ENCODE measurements at regions of chr1 and their contacts with region 1.

Region 1: DNA sequence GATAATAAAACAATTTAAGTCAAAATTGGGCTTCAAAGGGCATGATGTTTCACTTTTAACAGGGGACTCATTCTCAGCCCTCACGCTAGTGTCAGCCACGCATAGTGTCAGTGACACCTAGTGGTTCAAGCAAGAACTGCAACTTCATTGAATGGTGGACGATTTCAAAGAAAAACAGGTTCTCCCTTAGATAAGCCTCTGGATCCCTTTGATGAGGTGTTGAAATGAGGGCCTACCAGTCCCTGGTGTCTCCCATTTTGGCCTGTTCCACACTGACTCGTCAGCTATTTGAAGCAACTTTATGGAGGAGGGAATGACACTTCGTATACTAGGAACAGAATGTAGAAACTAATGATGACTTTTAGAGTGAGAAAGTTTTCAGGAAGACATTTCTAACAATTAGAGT is 56.2 kb downstream of the FCRL5 start:
- DNase-seq: no peak
- ATAC-seq: peak; percentile 83
- H3K4me3 ChIP-seq: no peak overlapping the region
- H3K27ac ChIP-seq: no peak overlapping the region
- H3K4me1 ChIP-seq: peaks cover 4% of the 10 kb centered on the region; the same call in 1 of the 2 replicates
- H3K27me3 ChIP-seq: 0 out of 4 replicates have a peak, but pooled peaks cover 0 to 2% of the 10 kb centered on the region in 2 experiments
- CTCF ChIP-seq: peak; percentile 67 to 85 (median 81)
- EP300 ChIP-seq: no peak
- POLR2A ChIP-seq: no peak
- RAD21 ChIP-seq: peak; percentile 63

Region 2: DNA sequence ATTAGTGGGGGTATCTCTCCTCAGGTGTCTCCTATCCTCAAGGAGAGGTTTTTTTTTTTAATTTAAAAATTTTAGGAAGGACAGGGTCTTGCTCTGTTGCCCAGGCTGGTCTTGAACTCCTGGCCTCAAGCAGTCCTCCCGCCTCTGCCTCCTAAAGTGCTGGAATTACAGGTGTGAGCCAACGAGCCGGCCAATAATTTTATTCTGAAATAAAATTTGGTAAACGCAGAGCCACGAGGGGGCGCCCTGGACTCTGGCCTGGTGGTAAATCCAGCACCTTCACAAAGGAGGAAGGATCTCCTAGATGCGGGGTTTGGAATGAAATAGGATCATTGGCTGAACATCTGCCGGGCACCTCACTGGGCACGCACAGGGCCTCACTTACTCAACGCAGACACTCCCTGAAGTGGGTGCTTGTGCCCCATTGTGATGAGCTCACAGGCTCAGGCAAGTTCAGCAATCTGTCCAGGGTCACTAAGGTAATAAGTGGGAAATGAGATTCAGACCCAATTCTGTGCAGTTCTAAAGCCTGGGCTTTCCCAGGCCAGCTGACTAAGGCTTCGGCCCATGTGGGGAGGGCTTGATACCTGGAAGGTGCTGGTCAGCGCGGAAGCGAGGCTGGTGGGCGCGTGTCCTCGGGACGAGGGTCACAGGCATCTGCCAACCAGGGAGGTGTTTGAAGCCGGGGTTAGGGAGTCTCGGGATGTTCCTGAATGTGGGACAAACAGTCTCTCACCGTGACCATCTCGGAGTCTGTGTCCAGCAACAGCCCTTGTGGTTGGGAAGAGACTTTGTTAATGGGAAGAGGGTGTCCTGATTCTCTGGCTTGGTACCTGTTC is 325.2 kb before region 1 on chr1:
- CTCF ChIA-PET with region 1: interaction called, 12 read pairs
- POLR2A ChIA-PET with region 1: no interaction called
- RAD21 ChIA-PET with region 1: interaction called, 6 read pairs
- SMC1A ChIA-PET with region 1: interaction called, 7 read pairs
- in situ Hi-C with region 1: no loop called
- intact Hi-C with region 1: no loop called
- DNase-seq: no peak
- ATAC-seq: no peak; the same call in 2 of the 3 replicates
- H3K4me3 ChIP-seq: no peak overlapping the region
- H3K27ac ChIP-seq: no peak overlapping the region
- H3K4me1 ChIP-seq: peaks cover 43% of the 10 kb centered on the region
- H3K27me3 ChIP-seq: no peaks in the 10 kb centered on the region
- CTCF ChIP-seq: peak; percentile 49 to 67 (median 59)
- EP300 ChIP-seq: no peak
- POLR2A ChIP-seq: no peak
- RAD21 ChIP-seq: peak; percentile 35

Region 3: DNA sequence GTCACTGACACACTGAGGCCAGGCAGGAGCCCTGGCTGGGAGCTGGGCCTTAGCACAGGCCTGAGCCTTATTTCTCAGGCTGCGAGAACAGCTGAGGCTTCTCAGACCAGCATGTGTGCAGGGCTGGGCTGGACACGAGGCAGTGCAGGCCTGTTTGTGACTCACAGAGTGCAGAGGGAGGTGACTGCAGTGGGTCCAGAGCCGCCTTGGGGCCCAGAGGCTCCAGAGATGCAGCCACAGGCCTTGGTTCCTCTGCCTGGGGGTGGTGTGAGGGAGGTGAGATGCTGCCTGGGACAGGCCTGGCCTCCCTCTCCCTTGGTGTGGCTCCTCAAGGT is 296.7 kb before region 1 on chr1:
- CTCF ChIA-PET with region 1: interaction called, 24 read pairs
- POLR2A ChIA-PET with region 1: no interaction called
- RAD21 ChIA-PET with region 1: interaction called, 3 read pairs
- SMC1A ChIA-PET with region 1: interaction called, 23 read pairs
- in situ Hi-C with region 1: loop called (anchors 5 kb)
- intact Hi-C with region 1: no loop called
- DNase-seq: no peak
- ATAC-seq: no peak; the same call in 1 of the 3 replicates
- H3K4me3 ChIP-seq: no peak overlapping the region
- H3K27ac ChIP-seq: no peak overlapping the region
- H3K4me1 ChIP-seq: no peaks in the 10 kb centered on the region
- H3K27me3 ChIP-seq: no peaks in the 10 kb centered on the region
- CTCF ChIP-seq: no peak
- EP300 ChIP-seq: no peak
- POLR2A ChIP-seq: no peak
- RAD21 ChIP-seq: no peak

Region 4: GRCh38 chr1:157363660-157364140 is 132.4 kb before region 1 on chr1:
- CTCF ChIA-PET with region 1: interaction called, 38 read pairs
- POLR2A ChIA-PET with region 1: no interaction called
- RAD21 ChIA-PET with region 1: interaction called, 5 read pairs
- SMC1A ChIA-PET with region 1: interaction called, 5 read pairs
- in situ Hi-C with region 1: loop called (anchors 5 kb)
- intact Hi-C with region 1: no loop called
- DNase-seq: peak; percentile 20
- ATAC-seq: peak; percentile 98
- H3K4me3 ChIP-seq: no peak overlapping the region
- H3K27ac ChIP-seq: no peak overlapping the region; the same call in 1 of the 2 replicates
- H3K4me1 ChIP-seq: peaks cover 11% of the 10 kb centered on the region
- H3K27me3 ChIP-seq: no peaks in the 10 kb centered on the region
- CTCF ChIP-seq: peak; percentile 57 to 72 (median 70)
- EP300 ChIP-seq: no peak
- POLR2A ChIP-seq: no peak
- RAD21 ChIP-seq: peak; percentile 49; the same call in 1 of the 2 replicates

Region 5: DNA sequence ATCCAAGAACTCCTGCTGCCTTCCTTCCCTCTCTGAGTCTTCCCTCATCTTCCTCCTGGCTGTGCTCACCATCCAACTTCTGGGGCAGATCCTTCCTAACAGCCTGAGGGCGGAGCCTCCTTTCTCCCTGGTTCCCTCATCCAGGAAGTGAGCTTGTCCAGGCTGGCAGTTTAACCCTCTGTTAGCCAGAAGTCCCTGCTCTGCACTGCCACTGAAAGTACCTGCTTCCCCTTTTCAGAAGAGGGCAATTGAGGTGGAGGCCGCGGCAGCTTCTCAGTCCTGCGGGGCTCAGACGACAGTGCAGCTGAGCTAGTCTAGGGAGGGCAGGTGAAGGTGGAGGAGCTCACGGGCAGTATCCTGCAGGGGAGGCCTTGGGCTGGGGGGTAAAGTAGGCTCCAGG is 92.9 kb before region 1 on chr1:
- CTCF ChIA-PET with region 1: interaction called, 15 read pairs
- POLR2A ChIA-PET with region 1: no interaction called
- RAD21 ChIA-PET with region 1: interaction called, 6 read pairs
- SMC1A ChIA-PET with region 1: interaction called, 4 read pairs
- in situ Hi-C with region 1: no loop called
- intact Hi-C with region 1: no loop called
- DNase-seq: no peak
- ATAC-seq: peak; percentile 89
- H3K4me3 ChIP-seq: no peak overlapping the region
- H3K27ac ChIP-seq: no peak overlapping the region
- H3K4me1 ChIP-seq: peaks cover 27% of the 10 kb centered on the region
- H3K27me3 ChIP-seq: no peaks in the 10 kb centered on the region; a peak in 1 of 4 replicates
- CTCF ChIP-seq: no peak
- EP300 ChIP-seq: peak; percentile 39 to 65; a peak in 2 of 4 replicates
- POLR2A ChIP-seq: no peak
- RAD21 ChIP-seq: no peak

Region 6: GRCh38 chr1:157512036-157512969 is 16.2 kb after region 1 on chr1:
- CTCF ChIA-PET with region 1: interaction called, 196 read pairs
- POLR2A ChIA-PET with region 1: interaction called, 3 read pairs
- RAD21 ChIA-PET with region 1: interaction called, 10 read pairs
- SMC1A ChIA-PET with region 1: interaction called, 47 read pairs
- in situ Hi-C with region 1: no loop called
- intact Hi-C with region 1: no loop called
- DNase-seq: peak; percentile 68
- ATAC-seq: peak; percentile 74
- H3K4me3 ChIP-seq: no peak overlapping the region
- H3K27ac ChIP-seq: peak overlapping the region; percentile 88
- H3K4me1 ChIP-seq: peaks cover 50% of the 10 kb centered on the region
- H3K27me3 ChIP-seq: no peaks in the 10 kb centered on the region
- CTCF ChIP-seq: no peak
- EP300 ChIP-seq: peak; percentile 89 to 95
- POLR2A ChIP-seq: no peak
- RAD21 ChIP-seq: no peak

Region 7: DNA sequence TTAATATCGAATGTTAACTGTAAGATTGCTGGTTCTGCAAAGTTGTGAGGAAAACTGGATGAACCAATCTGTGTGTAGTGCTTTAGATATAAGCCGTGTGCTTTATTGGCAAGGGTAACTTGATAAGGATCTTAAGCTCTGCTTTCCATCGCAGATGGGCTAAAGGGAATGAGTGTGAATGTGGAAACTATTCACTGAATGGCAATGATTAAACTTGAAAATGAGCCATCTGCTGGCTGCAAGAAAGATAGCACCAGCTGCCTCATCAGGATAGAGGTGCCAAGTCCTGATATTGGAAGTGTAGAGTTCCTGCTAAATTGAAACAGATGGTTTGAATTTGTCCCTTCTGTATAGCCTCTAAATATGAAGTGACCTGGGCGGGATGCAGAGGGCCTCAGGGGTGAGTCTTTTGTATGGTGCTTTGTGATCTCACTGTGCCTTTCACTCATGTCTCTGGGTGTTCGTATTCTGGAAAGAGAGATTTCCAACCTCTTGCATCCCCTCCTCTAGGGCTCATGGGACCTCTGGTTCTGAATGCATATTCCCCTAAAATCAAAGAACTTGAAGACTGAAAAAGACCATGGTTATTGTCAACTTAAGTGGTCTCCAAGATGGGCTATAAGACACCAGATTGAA is 195.3 kb after region 1 on chr1:
- CTCF ChIA-PET with region 1: interaction called, 11 read pairs
- POLR2A ChIA-PET with region 1: no interaction called
- RAD21 ChIA-PET with region 1: no interaction called
- SMC1A ChIA-PET with region 1: interaction called, 3 read pairs
- in situ Hi-C with region 1: no loop called
- intact Hi-C with region 1: no loop called
- DNase-seq: no peak
- ATAC-seq: peak; percentile 73
- H3K4me3 ChIP-seq: no peak overlapping the region
- H3K27ac ChIP-seq: no peak overlapping the region
- H3K4me1 ChIP-seq: no peaks in the 10 kb centered on the region
- H3K27me3 ChIP-seq: peaks cover 0 to 2% of the 10 kb centered on the region in 2 experiments; a peak in 1 of 4 replicates
- CTCF ChIP-seq: peak; percentile 58 to 73 (median 67)
- EP300 ChIP-seq: no peak
- POLR2A ChIP-seq: no peak
- RAD21 ChIP-seq: peak; percentile 59

Measured in GM12878 (cell line).